Activated CD4-positive, alpha-beta memory T cell treated with anti-CD3 and anti-CD28 coated beads for 36 hours (primary cell): ENCODE measurements at regions of chr6 and their contacts with region 1.

Region 1: GRCh38 chr6:135640449-135641111 is 143.0 kb upstream of the AHI1 start:
- DNase-seq: no peak
- H3K4me3 Mint-ChIP-seq: no peak overlapping the region
- H3K27ac Mint-ChIP-seq: no peak overlapping the region
- H3K4me1 Mint-ChIP-seq: peaks cover 19% of the 10 kb centered on the region
- H3K27me3 Mint-ChIP-seq: peaks cover 1% of the 10 kb centered on the region

Region 2: GRCh38 chr6:135624402-135625295 is 15.9 kb before region 1 on chr6:
- CTCF ChIA-PET with region 1: interaction called, 4 read pairs
- POLR2A ChIA-PET with region 1: no interaction called
- intact Hi-C with region 1: loop called (anchors 2 kb)
- DNase-seq: no peak
- H3K4me3 Mint-ChIP-seq: no peak overlapping the region
- H3K27ac Mint-ChIP-seq: no peak overlapping the region
- H3K4me1 Mint-ChIP-seq: peaks cover 14% of the 10 kb centered on the region
- H3K27me3 Mint-ChIP-seq: peaks cover 6% of the 10 kb centered on the region

Region 3: GRCh38 chr6:135703621-135704020 is 63.0 kb after region 1 on chr6:
- CTCF ChIA-PET with region 1: no interaction called
- POLR2A ChIA-PET with region 1: no interaction called
- intact Hi-C with region 1: loop called (anchors 5 kb)
- DNase-seq: peak; percentile 56
- H3K4me3 Mint-ChIP-seq: no peak overlapping the region
- H3K27ac Mint-ChIP-seq: no peak overlapping the region
- H3K4me1 Mint-ChIP-seq: peaks cover 12% of the 10 kb centered on the region
- H3K27me3 Mint-ChIP-seq: peaks cover 16% of the 10 kb centered on the region